Mammary epithelial cell (primary cell): ENCODE measurements at regions of chr19 and their contacts with region 1.

Region 1: DNA sequence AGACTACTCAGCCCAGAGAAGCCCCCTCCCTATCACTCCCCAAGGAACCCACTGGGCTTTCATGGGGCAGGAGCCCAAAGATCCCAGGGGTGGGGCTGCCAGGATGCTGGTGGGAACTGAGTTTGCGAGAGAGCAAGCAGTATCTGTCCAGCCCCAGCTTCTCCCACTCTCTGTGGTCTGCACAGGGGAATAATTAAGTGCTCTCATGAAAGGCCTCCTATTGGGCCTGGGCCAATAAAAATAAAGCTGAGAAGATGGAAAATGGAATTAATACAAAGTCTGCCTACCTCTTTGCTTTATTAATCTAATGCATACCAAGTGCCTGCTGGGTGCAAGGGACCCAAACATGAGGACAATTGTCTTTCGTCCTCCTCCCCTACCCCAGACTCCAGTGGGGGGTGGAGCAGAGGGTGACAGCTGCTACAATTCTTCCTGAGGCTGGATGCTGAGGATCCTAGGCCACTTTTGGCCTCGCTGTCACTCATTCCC is 5.4 kb downstream of the DDX39A start:
- DNase-seq: no peak
- H3K4me3 ChIP-seq: no peak overlapping the region
- H3K27ac ChIP-seq: no peak overlapping the region
- H3K4me1 ChIP-seq: peaks cover 16% of the 10 kb centered on the region
- H3K27me3 ChIP-seq: no peaks in the 10 kb centered on the region
- CTCF ChIP-seq: no peak

Region 2: GRCh38 chr19:14117668-14118164 is 296.0 kb before region 1 on chr19 and contains the start of gene PRKACA:
- CTCF ChIA-PET with region 1: no interaction called
- dilution Hi-C with region 1: loop called (anchors 5 kb)
- in situ Hi-C with region 1: no loop called
- intact Hi-C with region 1: no loop called
- DNase-seq: peak; percentile 100
- H3K4me3 ChIP-seq: peak within 1 kb of the TSS; percentile 83 to 87 (median 87)
- H3K27ac ChIP-seq: peak within 1 kb of the TSS; percentile 27
- H3K4me1 ChIP-seq: peaks cover 36% of the 10 kb centered on the region
- H3K27me3 ChIP-seq: no peaks in the 10 kb centered on the region
- CTCF ChIP-seq: no peak
- total RNA-seq, gene PRKACA: 44.0 to 82.1 TPM

Region 3: DNA sequence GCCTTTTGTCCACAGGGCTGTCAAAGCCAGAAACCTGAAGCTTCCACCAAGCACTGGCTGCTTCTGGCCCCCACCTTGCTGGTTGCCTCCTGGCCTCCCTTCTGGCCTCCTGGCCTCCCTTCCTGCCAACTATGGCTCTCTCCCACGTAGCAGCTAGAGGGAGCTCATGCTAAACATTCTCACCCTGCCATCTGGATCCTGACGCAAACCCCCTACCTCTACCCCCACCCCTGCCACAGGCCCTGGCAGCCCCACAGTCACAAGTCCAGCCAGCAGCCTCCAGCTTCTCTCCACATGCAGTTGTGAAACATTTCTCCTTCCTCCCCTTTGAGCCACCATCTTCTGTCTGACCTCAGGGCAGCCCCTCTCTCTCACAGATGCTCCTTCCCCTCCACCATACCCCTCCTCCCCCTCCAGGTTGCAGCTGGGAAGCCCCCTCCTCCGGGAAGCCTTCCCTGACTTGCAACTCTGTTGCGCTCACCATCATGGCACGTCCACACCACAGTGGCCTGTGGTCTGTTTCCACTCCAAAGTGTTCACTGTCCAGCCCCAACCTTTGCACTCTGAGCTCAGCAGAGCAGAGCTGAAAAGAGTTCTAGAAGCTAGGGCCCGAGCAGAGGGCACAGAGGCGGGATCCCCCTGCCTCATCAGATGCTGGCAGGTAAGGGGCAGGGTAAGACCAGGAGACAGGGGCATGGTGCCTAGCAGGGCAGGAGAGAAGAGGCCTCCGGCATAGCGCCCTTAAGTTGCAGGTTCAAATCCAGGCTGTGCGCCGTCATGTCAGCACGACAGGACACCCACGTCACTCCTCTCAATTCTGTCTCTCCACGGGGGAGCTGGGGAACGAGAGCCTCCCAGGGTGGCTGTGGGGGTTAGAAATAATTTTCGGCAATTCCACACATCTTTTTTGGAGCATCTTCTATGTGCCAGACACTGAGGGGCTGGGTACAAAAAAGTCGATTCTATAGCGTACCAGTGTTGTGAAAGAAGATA is 215.1 kb before region 1 on chr19:
- CTCF ChIA-PET with region 1: no interaction called
- dilution Hi-C with region 1: loop called (anchors 5 kb)
- in situ Hi-C with region 1: no loop called
- intact Hi-C with region 1: no loop called
- DNase-seq: no peak
- H3K4me3 ChIP-seq: no peak overlapping the region
- H3K27ac ChIP-seq: no peak overlapping the region
- H3K4me1 ChIP-seq: no peaks in the 10 kb centered on the region
- H3K27me3 ChIP-seq: peaks cover 2% of the 10 kb centered on the region
- CTCF ChIP-seq: peak in 1 of 2 donors; percentile 16

Region 4: DNA sequence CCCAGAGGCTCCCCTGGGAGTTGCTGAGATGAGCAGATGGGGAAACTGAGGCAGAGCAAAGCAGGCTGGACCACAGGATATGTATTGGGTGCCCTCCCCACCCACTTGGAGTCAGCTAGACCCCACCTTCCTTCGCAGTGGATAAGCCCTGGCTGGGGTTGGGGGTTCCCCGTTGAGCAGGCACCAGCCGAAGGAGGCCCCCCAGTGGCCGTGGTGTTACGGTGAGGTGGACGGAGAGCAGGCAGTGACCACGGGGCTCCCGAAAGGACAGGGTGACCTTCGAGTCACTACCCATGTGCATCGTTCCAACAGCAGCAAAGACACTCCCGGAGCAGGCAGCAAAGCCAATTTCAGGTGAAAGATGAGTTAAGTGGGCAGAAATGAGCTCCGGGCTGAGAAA is 94.9 kb before region 1 on chr19:
- CTCF ChIA-PET with region 1: no interaction called
- dilution Hi-C with region 1: no loop called
- in situ Hi-C with region 1: no loop called
- intact Hi-C with region 1: no loop called
- DNase-seq: no peak
- H3K4me3 ChIP-seq: no peak overlapping the region
- H3K27ac ChIP-seq: no peak overlapping the region
- H3K4me1 ChIP-seq: no peaks in the 10 kb centered on the region
- H3K27me3 ChIP-seq: no peaks in the 10 kb centered on the region
- CTCF ChIP-seq: peak in 1 of 2 donors; percentile 41

Region 5: DNA sequence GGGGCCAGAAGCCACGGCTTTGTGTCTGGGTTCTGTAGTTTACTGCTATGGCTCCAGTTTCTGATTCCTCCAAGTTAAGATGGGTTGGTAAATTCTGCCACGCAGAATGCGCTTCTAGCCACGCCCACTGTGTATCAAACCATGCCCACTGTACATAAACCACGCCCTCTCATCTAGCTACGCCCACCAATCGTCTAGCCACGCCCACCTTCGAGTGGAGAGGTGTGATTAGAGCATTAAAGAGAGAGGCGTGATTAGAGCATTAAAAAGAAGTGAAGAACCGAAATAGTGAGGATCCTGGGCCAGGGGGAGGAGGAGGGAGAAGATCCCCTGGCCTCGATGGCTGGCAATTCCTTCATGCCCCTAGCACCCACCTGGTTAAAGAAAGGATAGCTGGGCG is 76.2 kb before region 1 on chr19:
- CTCF ChIA-PET with region 1: no interaction called
- dilution Hi-C with region 1: loop called (anchors 5 kb)
- in situ Hi-C with region 1: no loop called
- intact Hi-C with region 1: no loop called
- DNase-seq: no peak
- H3K4me3 ChIP-seq: no peak overlapping the region
- H3K27ac ChIP-seq: no peak overlapping the region
- H3K4me1 ChIP-seq: peaks cover 6% of the 10 kb centered on the region
- H3K27me3 ChIP-seq: no peaks in the 10 kb centered on the region
- CTCF ChIP-seq: no peak

Region 6: DNA sequence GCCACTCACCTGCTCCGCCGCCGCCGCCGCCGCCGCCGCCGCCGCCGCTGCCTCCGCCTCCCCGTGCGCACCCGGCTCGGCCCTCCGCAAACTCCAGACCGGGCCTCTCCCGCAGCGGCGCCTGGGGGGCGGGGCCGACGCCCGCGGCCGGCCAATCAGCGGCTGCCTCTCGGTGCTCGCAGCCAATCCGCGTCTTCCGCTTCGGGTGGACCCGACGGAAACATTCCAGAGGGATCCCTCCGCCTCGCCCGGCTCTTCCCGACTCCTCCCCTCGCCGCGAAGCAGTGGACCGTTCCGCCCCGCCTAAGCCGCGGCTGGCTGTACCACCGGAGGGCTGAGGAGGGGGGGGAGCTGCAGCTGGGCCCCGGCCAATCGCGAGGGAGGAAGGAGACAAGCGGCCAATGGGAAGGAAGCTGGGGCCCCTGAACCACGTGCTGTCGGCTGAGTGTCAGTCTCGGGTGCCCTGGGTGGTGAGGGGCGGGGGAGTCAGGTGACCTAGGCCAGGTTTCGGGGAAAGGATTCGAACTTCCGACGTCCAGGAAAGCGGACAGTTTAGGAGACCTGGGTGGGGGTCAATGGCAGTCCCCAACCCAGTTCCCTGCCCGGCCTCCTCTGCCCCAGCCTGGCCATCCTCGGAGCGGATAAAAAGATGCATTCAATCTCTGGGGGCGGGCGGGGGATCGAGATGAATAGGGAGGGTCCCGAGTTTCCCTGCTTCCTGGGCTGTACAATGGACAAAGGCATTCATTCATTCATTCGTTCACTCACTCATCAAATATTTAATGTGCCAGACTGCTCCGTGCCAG is 82.5 kb after region 1 on chr19 and contains the start of gene GIPC1:
- CTCF ChIA-PET with region 1: no interaction called
- dilution Hi-C with region 1: loop called (anchors 5 kb)
- in situ Hi-C with region 1: no loop called
- intact Hi-C with region 1: no loop called
- DNase-seq: peak; percentile 99
- H3K4me3 ChIP-seq: peak within 1 kb of the TSS; percentile 89 to 99 (median 96)
- H3K27ac ChIP-seq: peak within 1 kb of the TSS; percentile 66
- H3K4me1 ChIP-seq: peaks cover 23% of the 10 kb centered on the region
- H3K27me3 ChIP-seq: no peaks in the 10 kb centered on the region
- CTCF ChIP-seq: no peak
- total RNA-seq, gene GIPC1: 186 to 190 TPM

Region 7: DNA sequence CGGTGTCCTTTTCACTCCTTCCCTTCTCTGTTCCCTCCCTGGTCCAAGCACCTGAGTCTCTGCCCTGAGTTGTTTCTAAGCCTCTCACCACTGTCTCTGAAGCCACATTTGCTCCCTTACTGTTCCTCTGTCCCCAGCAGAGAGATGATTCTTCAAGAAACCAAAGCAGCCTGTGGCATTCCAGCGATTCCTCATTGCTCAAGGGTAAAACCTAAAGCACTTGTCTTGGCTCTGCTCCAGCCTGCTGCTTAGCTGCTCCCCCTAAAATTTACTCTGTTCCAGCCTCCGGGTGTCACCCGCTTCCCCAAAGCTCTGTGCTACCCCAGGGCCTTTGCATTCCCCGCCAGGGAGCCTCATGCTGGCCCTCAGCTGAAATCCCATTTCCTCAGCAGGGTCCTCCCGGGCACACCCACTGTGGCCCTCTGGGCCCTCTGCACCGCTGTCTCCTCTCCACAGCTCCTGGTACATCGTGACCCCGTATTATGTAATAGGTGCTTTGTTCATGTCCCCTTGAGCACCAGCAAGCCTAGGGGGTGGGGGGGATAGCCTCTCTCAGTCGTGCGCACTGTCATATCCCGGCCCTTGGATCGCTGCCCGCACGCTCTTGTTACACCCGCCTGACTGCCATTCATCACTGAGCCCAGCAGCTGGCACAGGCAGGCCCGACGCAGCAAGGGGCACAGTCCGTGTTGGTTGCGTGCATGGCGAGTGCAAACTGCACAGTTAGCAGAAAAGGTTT is 131.4 kb after region 1 on chr19:
- CTCF ChIA-PET with region 1: no interaction called
- dilution Hi-C with region 1: no loop called
- in situ Hi-C with region 1: no loop called
- intact Hi-C with region 1: no loop called
- DNase-seq: no peak
- H3K4me3 ChIP-seq: no peak overlapping the region
- H3K27ac ChIP-seq: no peak overlapping the region
- H3K4me1 ChIP-seq: peaks cover 22% of the 10 kb centered on the region
- H3K27me3 ChIP-seq: no peaks in the 10 kb centered on the region
- CTCF ChIP-seq: no peak